ENCODE measurements at regions of chr10 and their contacts with region 1.

Region 1: DNA sequence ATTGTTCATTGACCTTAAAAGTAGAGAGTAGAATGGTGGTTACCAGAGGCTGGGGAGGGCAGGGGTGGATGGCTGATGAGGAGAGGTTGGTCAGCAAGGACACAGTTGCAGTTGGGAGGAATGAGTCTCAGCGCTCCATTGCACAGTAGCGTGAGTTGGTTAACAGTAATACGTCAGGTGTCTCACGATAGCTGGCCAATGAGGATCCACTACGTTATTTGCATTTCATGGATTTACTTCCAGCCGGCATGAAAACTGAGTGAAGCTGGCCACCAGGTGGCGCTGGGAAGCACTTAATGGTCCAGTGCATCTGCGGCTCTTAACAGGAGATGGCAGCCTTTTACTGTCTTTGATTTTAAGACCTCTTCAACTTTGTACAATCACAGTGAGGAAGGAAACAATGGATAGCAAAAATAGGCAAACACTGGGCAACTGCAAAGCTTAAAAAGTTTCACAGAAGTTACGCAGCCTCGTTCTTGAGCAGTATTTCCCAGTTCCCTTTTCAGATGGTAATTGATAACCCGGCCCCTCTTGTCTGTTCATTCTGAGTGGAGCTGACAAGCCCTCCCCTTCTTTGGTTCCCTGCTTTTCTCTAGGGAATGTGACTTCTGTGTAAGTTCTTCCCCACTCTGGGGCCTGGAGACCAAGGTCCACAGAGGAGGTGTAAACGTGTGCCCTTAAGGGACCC is 23.7 kb downstream of the AKR1E2 start:
- DNase-seq: peak; percentile 98
- H3K4me3 ChIP-seq: no peak overlapping the region
- H3K27ac ChIP-seq: peak overlapping the region; percentile 4 to 70 (median 36)
- H3K4me1 ChIP-seq: peaks cover 8 to 57% (median 33%) of the 10 kb centered on the region in 4 donors
- H3K27me3 ChIP-seq: no peaks in the 10 kb centered on the region
- CTCF ChIP-seq: peak; percentile 98 to 100 (median 100)
- EP300 ChIP-seq: no peak
- POLR2A ChIP-seq: no peak

Region 2: DNA sequence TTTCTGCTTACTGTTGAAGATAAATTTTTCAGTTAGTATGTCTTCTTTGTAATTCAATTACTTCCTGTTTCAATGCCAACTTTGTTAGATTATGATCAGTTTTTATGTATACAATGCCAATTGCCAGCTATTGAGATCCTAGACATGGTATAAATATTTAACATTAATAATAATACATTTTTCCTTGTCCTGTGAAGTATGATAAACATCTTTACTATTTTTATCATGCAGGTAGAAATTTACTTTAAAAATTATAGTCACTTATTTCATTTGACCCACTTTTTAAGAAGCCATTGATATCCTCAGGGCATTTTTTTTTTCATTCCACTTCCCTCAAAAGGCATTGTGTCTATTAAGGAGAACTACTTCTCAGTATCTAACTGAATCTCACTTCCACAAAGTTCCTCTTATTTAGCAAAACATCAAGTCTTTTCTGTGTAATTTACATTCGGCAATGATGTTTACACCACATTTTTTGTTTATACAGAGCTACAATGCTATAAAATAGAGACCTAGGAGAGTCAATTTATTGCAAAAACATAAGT is 412.0 kb before region 1 on chr10:
- intact Hi-C with region 1: no loop called
- DNase-seq: no peak
- H3K4me3 ChIP-seq: no peak overlapping the region
- H3K27ac ChIP-seq: no peak overlapping the region
- H3K4me1 ChIP-seq: peaks cover 0 to 19% (median 7%) of the 10 kb centered on the region in 4 donors
- H3K27me3 ChIP-seq: no peaks in the 10 kb centered on the region
- CTCF ChIP-seq: no peak
- EP300 ChIP-seq: no peak
- POLR2A ChIP-seq: no peak

Region 3: GRCh38 chr10:4704034-4704545 is 145.6 kb before region 1 on chr10:
- intact Hi-C with region 1: no loop called
- DNase-seq: no peak
- H3K4me3 ChIP-seq: no peak overlapping the region
- H3K27ac ChIP-seq: peak overlapping the region in 1 of 4 donors; percentile 0
- H3K4me1 ChIP-seq: no peaks in the 10 kb centered on the region
- H3K27me3 ChIP-seq: no peaks in the 10 kb centered on the region
- CTCF ChIP-seq: no peak
- EP300 ChIP-seq: no peak
- POLR2A ChIP-seq: no peak

Region 4: DNA sequence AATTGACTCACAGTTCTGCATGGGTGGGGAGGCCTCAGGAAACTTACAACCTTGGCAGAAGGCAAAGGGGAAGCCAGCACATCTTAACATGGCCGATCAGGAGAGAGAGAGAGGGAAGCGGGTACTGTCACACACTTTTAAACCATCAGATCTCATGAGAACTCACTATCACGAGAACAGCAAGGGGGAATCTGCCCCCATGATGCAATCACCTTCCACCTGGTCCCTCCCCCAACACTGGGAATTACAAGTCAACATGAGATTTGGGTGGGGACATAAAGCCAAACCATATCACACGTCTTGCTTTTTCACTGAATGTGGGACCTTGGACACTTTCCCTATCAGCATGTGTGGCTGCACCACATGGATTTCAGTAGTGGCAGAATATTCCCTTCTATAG is 32.7 kb before region 1 on chr10:
- intact Hi-C with region 1: loop called (anchors 2 kb)
- DNase-seq: no peak
- H3K4me3 ChIP-seq: no peak overlapping the region
- H3K27ac ChIP-seq: no peak overlapping the region
- H3K4me1 ChIP-seq: peaks cover 3 to 19% (median 13%) of the 10 kb centered on the region in 4 donors
- H3K27me3 ChIP-seq: no peaks in the 10 kb centered on the region
- CTCF ChIP-seq: no peak
- EP300 ChIP-seq: no peak
- POLR2A ChIP-seq: no peak

Region 5: GRCh38 chr10:4981722-4982471 is 132.2 kb after region 1 on chr10:
- intact Hi-C with region 1: loop called (anchors 5 kb)
- DNase-seq: no peak
- H3K4me3 ChIP-seq: no peak overlapping the region
- H3K27ac ChIP-seq: peak overlapping the region; percentile 27 to 60 (median 47)
- H3K4me1 ChIP-seq: peaks cover 18 to 38% (median 27%) of the 10 kb centered on the region in 4 donors
- H3K27me3 ChIP-seq: no peaks in the 10 kb centered on the region
- CTCF ChIP-seq: peak; percentile 37 to 55 (median 55)
- EP300 ChIP-seq: no peak
- POLR2A ChIP-seq: no peak

Region 6: DNA sequence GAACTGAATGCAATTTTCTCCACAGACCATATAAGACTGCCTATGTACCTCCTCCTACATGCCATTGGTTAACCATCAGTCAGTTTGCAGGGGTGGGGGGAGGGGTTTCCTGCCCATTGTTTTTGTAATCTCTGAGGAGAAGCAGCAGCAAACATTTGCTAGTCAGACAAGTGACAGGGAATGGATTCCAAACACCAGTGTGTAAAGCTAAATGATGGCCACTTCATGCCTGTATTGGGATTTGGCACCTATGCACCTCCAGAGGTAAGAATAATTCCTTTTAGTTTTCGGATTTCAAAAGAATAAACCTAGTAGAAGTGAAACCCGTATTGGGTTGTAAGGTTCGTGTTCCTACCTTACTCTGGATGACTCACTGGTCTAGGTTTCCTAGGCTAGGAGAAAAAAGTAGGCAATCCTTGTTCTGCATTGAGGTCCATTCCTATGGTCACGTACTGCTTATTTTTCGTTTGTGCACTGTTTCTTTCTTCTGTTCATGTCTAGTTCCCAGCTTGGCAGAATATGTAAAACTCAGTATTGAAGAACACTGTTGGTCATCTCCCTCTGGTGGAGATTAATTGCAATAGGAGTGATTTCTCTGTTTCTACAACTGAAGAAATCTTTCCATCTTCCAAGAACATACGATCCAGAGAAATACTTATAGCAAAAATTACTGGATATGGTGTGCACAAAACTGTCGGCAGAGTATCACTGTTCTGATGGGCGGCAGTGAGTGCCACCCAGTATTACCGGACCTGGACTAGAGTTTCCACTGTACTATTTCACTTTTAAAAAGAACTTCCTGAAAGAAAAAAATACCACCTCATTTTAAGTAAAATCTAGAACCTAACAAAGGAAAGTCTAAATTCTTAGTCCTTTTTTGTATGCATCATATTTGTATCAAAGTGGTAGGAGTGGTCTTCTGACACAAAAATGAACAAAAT is 244.8 kb after region 1 on chr10 and contains the start of gene AKR1C3:
- intact Hi-C with region 1: loop called (anchors 2 kb)
- DNase-seq: no peak
- H3K4me3 ChIP-seq: peak within 1 kb of the TSS; percentile 50 to 60 (median 54)
- H3K27ac ChIP-seq: peak within 1 kb of the TSS; percentile 54 to 64 (median 58)
- H3K4me1 ChIP-seq: peaks cover 0 to 10% (median 3%) of the 10 kb centered on the region in 4 donors
- H3K27me3 ChIP-seq: no peaks in the 10 kb centered on the region
- CTCF ChIP-seq: peak; percentile 69 to 77 (median 70)
- EP300 ChIP-seq: no peak
- POLR2A ChIP-seq: no peak
- total RNA-seq, gene AKR1C3: 12.1 to 29.7 (median 19.3) TPM

Region 7: GRCh38 chr10:5283305-5284158 is 433.8 kb after region 1 on chr10:
- intact Hi-C with region 1: loop called (anchors 2 kb)
- DNase-seq: peak; percentile 82
- H3K4me3 ChIP-seq: no peak overlapping the region
- H3K27ac ChIP-seq: no peak overlapping the region
- H3K4me1 ChIP-seq: peaks cover 0 to 6% (median 2%) of the 10 kb centered on the region in 4 donors
- H3K27me3 ChIP-seq: no peaks in the 10 kb centered on the region
- CTCF ChIP-seq: peak; percentile 61 to 74 (median 71)
- EP300 ChIP-seq: no peak
- POLR2A ChIP-seq: no peak

Region 8: DNA sequence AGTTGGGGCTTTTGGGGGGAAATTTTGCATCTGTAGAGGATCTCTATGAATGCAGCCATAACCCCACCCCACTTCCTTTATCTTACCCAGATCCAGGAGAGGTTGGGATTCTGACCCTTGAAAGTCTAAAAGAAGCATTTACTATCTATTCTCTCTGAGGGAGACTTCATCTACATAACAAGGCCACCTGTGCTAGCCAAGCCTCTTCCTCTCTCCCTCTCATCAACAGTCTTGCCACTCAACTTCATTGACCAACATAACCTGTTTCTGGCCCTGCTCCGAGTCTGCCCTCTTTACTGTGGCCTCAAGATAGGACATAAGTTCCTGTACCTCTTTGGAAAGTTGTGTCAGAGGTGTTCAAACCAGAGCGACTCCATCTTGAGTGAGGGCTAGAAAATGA is 535.5 kb after region 1 on chr10:
- intact Hi-C with region 1: loop called (anchors 10 kb)
- DNase-seq: peak; percentile 62
- H3K4me3 ChIP-seq: no peak overlapping the region
- H3K27ac ChIP-seq: no peak overlapping the region
- H3K4me1 ChIP-seq: no peaks in the 10 kb centered on the region
- H3K27me3 ChIP-seq: no peaks in the 10 kb centered on the region
- CTCF ChIP-seq: no peak
- EP300 ChIP-seq: no peak
- POLR2A ChIP-seq: no peak

Measured in esophagus muscularis mucosa (tissue), 4 donors.